A549 (cell line): ENCODE measurements at regions of chr17 and their contacts with region 1.

Region 1: DNA sequence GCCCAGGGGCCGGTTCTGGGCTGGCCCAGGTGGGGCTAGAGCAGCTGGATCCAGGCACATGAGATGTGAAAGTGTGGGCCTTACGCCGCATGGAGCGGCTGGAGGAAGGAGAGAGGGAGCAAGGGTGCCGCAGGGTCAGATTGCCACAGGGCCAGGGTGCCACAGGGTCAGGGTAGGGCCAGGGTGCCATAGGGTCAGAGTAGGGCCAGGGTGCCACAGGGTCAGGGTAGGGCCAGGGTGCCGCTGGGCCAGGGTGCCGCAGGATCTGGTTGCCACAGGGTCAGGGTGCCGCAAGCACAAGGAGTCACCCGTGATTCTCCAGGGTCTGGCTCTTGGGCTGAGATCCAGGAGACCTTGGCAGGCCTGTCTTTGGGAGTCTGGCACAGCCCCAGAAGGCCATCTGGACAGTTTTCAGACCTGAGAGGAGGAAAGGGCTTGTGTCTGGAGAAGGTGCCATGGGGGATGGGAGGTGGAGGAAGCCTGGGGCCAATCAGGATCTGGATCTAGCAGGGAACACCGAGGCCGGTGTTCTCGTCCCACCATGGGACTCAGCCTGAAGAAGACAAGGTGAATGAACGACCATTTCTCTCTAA is 13.1 kb upstream of the LASP1NB start:
- DNase-seq: no peak
- ATAC-seq: no peak
- H3K4me3 ChIP-seq: no peak overlapping the region
- H3K27ac ChIP-seq: peak overlapping the region in 1 of 2 experiments; percentile 39; a peak in 1 of 6 replicates
- H3K4me1 ChIP-seq: peaks cover 34% of the 10 kb centered on the region
- CTCF ChIP-seq: no peak
- EP300 ChIP-seq: no peak
- POLR2A ChIP-seq: no peak
- RAD21 ChIP-seq: no peak

Region 2: GRCh38 chr17:38922538-38923297 is 10.4 kb after region 1 on chr17:
- CTCF ChIA-PET with region 1: interaction called, 25 read pairs
- POLR2A ChIA-PET with region 1: no interaction called
- DNase-seq: no peak
- ATAC-seq: peak; percentile 59 to 63
- H3K4me3 ChIP-seq: no peak overlapping the region
- H3K27ac ChIP-seq: peak overlapping the region in 1 of 2 experiments; percentile 45; a peak in 3 of 6 replicates
- H3K4me1 ChIP-seq: peaks cover 11% of the 10 kb centered on the region; the same call in 1 of the 3 replicates
- CTCF ChIP-seq: no peak
- EP300 ChIP-seq: no peak
- POLR2A ChIP-seq: no peak
- RAD21 ChIP-seq: no peak